ENCODE measurements at regions of chr7 and their contacts with region 1.

Region 1: DNA sequence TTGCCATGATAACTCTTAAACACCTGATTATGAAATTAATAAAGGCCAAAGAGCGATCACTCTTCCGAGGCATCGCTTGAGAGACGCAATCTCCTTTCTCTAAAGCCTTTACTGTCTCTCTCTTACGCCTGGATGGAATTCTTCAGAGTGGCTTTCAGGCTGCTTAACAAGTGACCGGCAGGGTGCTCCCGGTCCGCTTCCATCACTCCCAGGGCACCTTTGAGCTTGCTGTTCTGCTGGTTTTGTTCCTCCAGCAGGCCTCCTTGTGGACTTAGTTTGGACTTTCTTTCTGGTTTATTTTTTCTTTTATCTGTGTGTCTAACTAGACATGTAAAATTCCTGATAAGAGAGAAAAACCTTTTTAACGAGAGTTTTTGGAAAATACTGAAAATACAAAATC is 60.9 kb downstream of the MRPL32 start:
- DNase-seq: peak; percentile 41
- ATAC-seq: peak; percentile 95
- H3K4me3 Mint-ChIP-seq: no peak overlapping the region
- H3K27ac Mint-ChIP-seq: no peak overlapping the region
- H3K4me1 Mint-ChIP-seq: peaks cover 20% of the 10 kb centered on the region
- H3K27me3 Mint-ChIP-seq: no peaks in the 10 kb centered on the region
- CTCF ChIP-seq: no peak

Region 2: DNA sequence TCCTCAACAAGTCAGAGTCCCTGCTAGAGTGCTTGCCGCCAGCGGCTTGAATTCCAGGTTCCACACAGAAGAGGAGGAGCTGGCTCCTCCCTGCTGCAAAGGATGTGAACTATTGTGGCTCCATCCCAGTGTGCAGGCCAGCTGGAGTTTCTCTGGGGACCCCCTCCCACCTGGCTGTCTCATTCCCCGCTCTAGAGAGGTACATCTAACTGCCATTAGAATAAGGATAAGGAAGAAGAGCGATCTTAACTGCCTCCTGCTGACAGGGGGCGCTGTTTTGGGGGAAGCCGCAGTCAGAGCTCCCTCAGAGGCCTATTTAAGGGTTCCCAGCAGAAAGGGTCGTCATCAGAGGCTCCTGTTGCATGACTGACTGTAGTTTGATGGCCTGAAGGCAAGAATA is 78.6 kb after region 1 on chr7:
- CTCF ChIA-PET with region 1: interaction called, 14 read pairs
- POLR2A ChIA-PET with region 1: no interaction called
- DNase-seq: peak; percentile 88
- ATAC-seq: peak; percentile 98
- H3K4me3 Mint-ChIP-seq: no peak overlapping the region
- H3K27ac Mint-ChIP-seq: no peak overlapping the region
- H3K4me1 Mint-ChIP-seq: peaks cover 24% of the 10 kb centered on the region
- H3K27me3 Mint-ChIP-seq: no peaks in the 10 kb centered on the region
- CTCF ChIP-seq: peak; percentile 85

Region 3: GRCh38 chr7:43092819-43093218 is 99.8 kb after region 1 on chr7:
- CTCF ChIA-PET with region 1: no interaction called
- POLR2A ChIA-PET with region 1: no interaction called
- DNase-seq: no peak
- ATAC-seq: no peak
- H3K4me3 Mint-ChIP-seq: no peak overlapping the region
- H3K27ac Mint-ChIP-seq: no peak overlapping the region
- H3K4me1 Mint-ChIP-seq: peaks cover 13% of the 10 kb centered on the region
- H3K27me3 Mint-ChIP-seq: no peaks in the 10 kb centered on the region
- CTCF ChIP-seq: no peak